ENCODE measurements at regions of chr1 and their contacts with region 1.

Region 1: GRCh38 chr1:43974443-43975248 is at the start of gene ATP6V0B:
- DNase-seq: peak; percentile 91
- ATAC-seq: peak; percentile 70
- H3K4me3 Mint-ChIP-seq: peak within 1 kb of the TSS; percentile 92
- H3K27ac Mint-ChIP-seq: peak within 1 kb of the TSS; percentile 91
- H3K4me1 Mint-ChIP-seq: peaks cover 65% of the 10 kb centered on the region
- H3K27me3 Mint-ChIP-seq: no peaks in the 10 kb centered on the region
- CTCF ChIP-seq: no peak
- total RNA-seq, gene ATP6V0B: 75.5 and 80.9 TPM in 2 replicates

Region 2: DNA sequence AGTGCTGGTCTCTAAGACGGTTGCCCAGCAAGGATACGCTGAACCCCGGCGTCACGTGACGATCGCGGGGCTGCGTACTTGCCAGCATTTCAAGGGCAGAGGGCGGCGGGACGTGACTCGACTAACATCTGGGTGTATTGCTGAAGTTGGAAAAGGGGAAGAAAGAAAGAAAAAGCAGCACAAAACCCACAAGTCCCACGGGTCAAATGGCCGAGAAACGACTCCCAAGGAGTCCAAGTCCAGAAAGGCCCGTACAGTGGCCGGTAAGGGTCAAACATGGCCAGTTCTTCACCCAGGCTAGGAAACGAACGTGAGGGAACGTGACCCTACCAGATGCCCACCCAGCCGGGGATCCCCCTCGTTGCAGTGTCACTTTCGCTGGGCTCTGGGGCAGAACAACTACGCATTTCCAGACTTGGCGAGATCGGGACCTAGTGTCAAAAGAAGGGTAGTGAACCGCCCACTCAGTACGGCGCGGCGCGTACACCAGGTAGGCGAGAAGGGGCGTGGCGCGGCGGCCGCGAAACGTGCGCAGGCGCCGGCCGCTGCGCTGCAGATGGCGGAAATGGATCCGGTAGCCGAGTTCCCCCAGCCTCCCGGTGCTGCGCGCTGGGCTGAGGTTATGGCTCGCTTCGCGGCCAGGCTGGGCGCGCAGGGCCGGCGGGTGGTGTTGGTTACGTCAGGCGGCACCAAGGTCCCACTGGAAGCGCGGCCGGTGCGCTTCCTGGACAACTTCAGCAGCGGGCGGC is 1518.5 kb before region 1 on chr1 and contains the starts of genes PPCS and ZMYND12:
- CTCF ChIA-PET with region 1: no interaction called
- POLR2A ChIA-PET with region 1: no interaction called
- intact Hi-C with region 1: loop called (anchors 10 kb)
- DNase-seq: peak; percentile 91
- ATAC-seq: peak; percentile 86
- H3K4me3 Mint-ChIP-seq: peak within 1 kb of the TSS; percentile 91
- H3K27ac Mint-ChIP-seq: peak within 1 kb of the TSS; percentile 98
- H3K4me1 Mint-ChIP-seq: peaks cover 27% of the 10 kb centered on the region
- H3K27me3 Mint-ChIP-seq: no peaks in the 10 kb centered on the region
- CTCF ChIP-seq: no peak
- total RNA-seq, gene PPCS: 63.1 and 65.3 TPM in 2 replicates
- total RNA-seq, gene ZMYND12: 0.53 and 0.56 TPM in 2 replicates

Region 3: GRCh38 chr1:43946236-43947060 is 28.2 kb before region 1 on chr1 and contains the start of gene IPO13:
- CTCF ChIA-PET with region 1: no interaction called
- POLR2A ChIA-PET with region 1: interaction called, 19 read pairs
- intact Hi-C with region 1: loop called (anchors 1 kb)
- DNase-seq: peak; percentile 98
- ATAC-seq: peak; percentile 95
- H3K4me3 Mint-ChIP-seq: peak within 1 kb of the TSS; percentile 91
- H3K27ac Mint-ChIP-seq: peak within 1 kb of the TSS; percentile 95
- H3K4me1 Mint-ChIP-seq: peaks cover 43% of the 10 kb centered on the region
- H3K27me3 Mint-ChIP-seq: no peaks in the 10 kb centered on the region
- CTCF ChIP-seq: no peak
- total RNA-seq, gene IPO13: 18.0 and 24.8 TPM in 2 replicates

Region 4: DNA sequence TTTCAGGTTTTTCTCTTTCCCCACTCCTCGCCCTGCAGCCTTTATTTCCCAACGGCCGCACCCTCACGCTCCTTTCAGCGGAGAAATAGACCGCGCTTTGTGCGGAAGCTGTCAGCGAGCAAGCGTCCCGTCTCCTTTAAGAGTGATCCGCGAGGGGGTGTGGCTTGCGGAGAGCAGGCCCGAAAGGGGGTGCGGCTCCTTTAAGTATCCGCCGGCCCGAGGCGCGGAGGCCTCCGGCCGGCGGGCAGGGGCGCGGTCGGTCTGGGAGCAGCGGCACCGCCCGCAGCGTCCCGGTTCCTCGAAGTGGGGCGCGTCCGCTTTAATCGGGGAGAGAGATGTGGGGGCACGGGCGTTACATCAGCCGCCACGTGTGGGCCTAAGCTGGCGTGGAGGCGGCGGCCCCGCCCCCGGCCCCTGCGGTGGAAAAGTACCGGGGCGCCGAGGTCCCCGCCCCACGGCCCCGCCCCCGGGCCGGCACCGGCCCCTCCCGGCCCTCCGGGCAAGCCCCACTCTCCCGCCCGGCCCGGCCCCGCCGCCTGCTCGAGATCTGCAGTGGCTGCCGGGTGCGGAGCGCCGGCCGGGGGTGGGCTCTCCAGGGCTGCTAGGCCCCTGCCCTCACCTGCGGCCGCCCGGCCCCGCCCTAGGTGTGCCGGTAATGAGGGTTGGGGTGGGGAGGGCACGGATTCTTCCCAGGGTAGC is 55.4 kb after region 1 on chr1:
- CTCF ChIA-PET with region 1: no interaction called
- POLR2A ChIA-PET with region 1: interaction called, 12 read pairs
- intact Hi-C with region 1: loop called (anchors 1 kb)
- DNase-seq: peak; percentile 93
- ATAC-seq: peak; percentile 76
- H3K4me3 Mint-ChIP-seq: peak overlapping the region; percentile 95
- H3K27ac Mint-ChIP-seq: peak overlapping the region; percentile 97
- H3K4me1 Mint-ChIP-seq: peaks cover 32% of the 10 kb centered on the region
- H3K27me3 Mint-ChIP-seq: no peaks in the 10 kb centered on the region
- CTCF ChIP-seq: no peak